ENCODE measurements at regions of chr1 and their contacts with region 1.

Region 1: GRCh38 chr1:92858564-92859399 is 26.9 kb downstream of the RPL5 start:
- DNase-seq: peak; percentile 58 to 74 (median 69)
- H3K4me3 ChIP-seq: no peak overlapping the region
- H3K4me3 Mint-ChIP-seq: peak overlapping the region; percentile 7 to 54
- H3K27ac ChIP-seq: no peak overlapping the region
- H3K27ac Mint-ChIP-seq: no peak overlapping the region
- H3K4me1 ChIP-seq: peaks cover 10 to 13% of the 10 kb centered on the region in 2 donors
- H3K4me1 Mint-ChIP-seq: peaks cover 22% of the 10 kb centered on the region
- H3K27me3 ChIP-seq: no peaks in the 10 kb centered on the region
- H3K27me3 Mint-ChIP-seq: peaks cover 0 to 1% (median 0%) of the 10 kb centered on the region in 3 donors
- CTCF ChIP-seq: peak; percentile 97

Region 2: DNA sequence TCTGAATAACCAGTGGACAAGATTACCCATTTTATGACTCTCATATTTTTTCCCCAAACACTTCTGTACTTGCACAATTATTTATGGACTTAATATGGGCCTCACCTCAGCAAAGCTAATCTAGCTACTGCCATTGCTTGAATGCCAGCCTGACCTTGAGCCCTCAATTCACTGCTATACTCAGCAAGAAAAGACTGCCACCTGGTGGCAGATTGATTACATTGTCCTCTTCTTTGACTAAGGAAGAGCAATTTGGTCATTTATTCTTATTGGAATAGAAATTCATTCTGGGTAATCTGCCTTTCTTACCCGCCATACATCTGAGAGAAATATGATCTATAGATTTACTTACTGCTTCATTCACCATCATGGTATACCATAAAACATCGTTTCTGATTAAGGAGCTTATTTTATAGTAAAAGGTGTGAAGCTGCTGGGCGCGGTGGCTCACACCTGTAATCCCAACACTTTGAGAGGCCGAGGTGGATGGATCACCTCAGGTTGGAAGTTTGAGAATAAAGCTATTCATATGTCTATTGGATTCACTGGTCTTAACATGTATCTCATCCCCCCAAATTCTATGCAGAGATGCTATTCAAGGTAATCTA is 135.4 kb after region 1 on chr1:
- intact Hi-C with region 1: loop called (anchors 2 kb)
- DNase-seq: peak; percentile 72 to 90 (median 78)
- H3K4me3 ChIP-seq: no peak overlapping the region
- H3K4me3 Mint-ChIP-seq: no peak overlapping the region
- H3K27ac ChIP-seq: no peak overlapping the region
- H3K27ac Mint-ChIP-seq: no peak overlapping the region
- H3K4me1 ChIP-seq: peaks cover 6 to 10% of the 10 kb centered on the region in 2 donors
- H3K4me1 Mint-ChIP-seq: peaks cover 14% of the 10 kb centered on the region
- H3K27me3 ChIP-seq: no peaks in the 10 kb centered on the region
- H3K27me3 Mint-ChIP-seq: peaks cover 0 to 3% (median 0%) of the 10 kb centered on the region in 3 donors
- CTCF ChIP-seq: peak; percentile 89